Activated CD4-positive, alpha-beta T cell treated with anti-CD3 and anti-CD28 coated beads, Interleukin-2, amount 10 ng/mL, durations not matched to agents 7 days and 5 days (primary cell): ENCODE measurements at regions of chr13 and their contacts with region 1.

Region 1: DNA sequence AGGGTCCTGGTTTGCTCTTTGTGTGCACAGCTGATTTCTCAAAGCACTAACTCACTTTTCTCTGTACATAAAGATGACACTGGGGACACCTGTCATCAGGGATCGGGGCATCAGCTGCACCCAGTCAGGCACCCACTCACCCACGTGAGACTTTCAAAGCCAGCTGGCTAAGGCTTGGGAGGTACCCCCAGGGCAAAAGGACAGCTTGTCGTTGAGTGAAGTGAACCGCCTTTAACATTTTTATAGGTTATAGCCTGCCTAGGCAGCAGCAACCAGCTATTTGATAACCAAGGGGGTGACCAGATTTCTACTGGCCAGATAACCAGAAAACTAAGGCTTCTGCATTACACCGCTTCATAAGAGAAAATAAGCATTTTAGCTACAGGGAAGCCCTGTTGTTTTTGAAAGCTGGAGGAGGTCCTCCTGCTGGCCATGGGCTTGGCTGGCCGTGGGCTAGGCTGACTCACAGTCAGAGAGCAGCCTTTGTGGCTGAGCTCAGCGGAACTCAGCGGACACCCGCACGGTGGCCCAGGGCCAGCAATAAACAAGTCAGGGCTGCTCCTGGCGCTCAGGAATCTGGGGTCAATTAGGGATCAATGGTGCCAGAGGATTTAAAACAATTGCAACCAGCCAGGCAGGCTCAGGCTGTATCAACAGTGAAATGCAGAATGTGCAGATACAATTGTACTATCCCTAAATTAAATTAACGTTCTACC is 57.1 kb downstream of the ALOX5AP start:
- DNase-seq: no peak
- H3K4me3 Mint-ChIP-seq: no peak overlapping the region
- H3K27ac Mint-ChIP-seq: no peak overlapping the region
- H3K4me1 Mint-ChIP-seq: peaks cover 29% of the 10 kb centered on the region
- H3K27me3 Mint-ChIP-seq: no peaks in the 10 kb centered on the region

Region 2: GRCh38 chr13:30681843-30682242 is 110.6 kb before region 1 on chr13:
- CTCF ChIA-PET with region 1: interaction called, 12 read pairs
- POLR2A ChIA-PET with region 1: interaction called, 7 read pairs
- DNase-seq: no peak
- H3K4me3 Mint-ChIP-seq: no peak overlapping the region
- H3K27ac Mint-ChIP-seq: no peak overlapping the region
- H3K4me1 Mint-ChIP-seq: peaks cover 4% of the 10 kb centered on the region
- H3K27me3 Mint-ChIP-seq: peaks cover 16% of the 10 kb centered on the region

Region 3: GRCh38 chr13:30802953-30803478 is 10.6 kb after region 1 on chr13:
- CTCF ChIA-PET with region 1: interaction called, 14 read pairs
- POLR2A ChIA-PET with region 1: no interaction called
- DNase-seq: peak; percentile 82
- H3K4me3 Mint-ChIP-seq: peak overlapping the region; percentile 30
- H3K27ac Mint-ChIP-seq: peak overlapping the region; percentile 51
- H3K4me1 Mint-ChIP-seq: peaks cover 19% of the 10 kb centered on the region
- H3K27me3 Mint-ChIP-seq: no peaks in the 10 kb centered on the region

Region 4: DNA sequence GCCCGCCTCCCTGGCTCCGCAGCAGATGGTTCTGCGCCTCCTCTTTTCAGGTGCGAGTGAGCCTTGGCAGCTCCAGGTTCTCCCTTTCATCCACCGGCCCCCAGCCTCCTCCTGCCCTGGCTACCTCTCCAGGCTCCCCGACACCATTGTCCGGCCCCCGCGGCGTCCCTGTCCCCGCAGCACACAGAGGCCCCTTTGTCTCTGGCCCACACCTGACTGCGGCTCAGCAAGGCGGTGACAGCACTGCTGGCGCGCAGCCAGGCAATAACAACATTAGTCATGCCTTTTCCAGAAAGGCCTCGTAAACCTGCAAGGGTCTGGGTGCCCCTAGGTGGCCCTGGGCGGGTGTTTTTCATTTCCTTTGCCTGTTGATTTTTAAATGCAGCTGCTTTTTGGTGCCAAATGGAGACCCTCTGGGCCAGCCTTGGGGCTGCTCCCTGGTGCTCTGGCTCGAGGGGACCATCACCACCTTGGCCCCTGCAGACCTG is 40.4 kb after region 1 on chr13:
- CTCF ChIA-PET with region 1: no interaction called
- POLR2A ChIA-PET with region 1: no interaction called
- DNase-seq: no peak
- H3K4me3 Mint-ChIP-seq: no peak overlapping the region
- H3K27ac Mint-ChIP-seq: no peak overlapping the region
- H3K4me1 Mint-ChIP-seq: peaks cover 15% of the 10 kb centered on the region
- H3K27me3 Mint-ChIP-seq: peaks cover 4% of the 10 kb centered on the region